B cell (primary cell): ENCODE measurements at regions of chr4 and their contacts with region 1.

Region 1: GRCh38 chr4:40629401-40630334 is at the start of gene RBM47:
- DNase-seq: peak; percentile 67
- ATAC-seq: peak; percentile 55
- H3K4me3 ChIP-seq: peak within 1 kb of the TSS; percentile 59 to 88 (median 70)
- H3K4me3 Mint-ChIP-seq: peak within 1 kb of the TSS; percentile 96
- H3K27ac ChIP-seq: peak within 1 kb of the TSS; percentile 61 to 72
- H3K27ac Mint-ChIP-seq: peak within 1 kb of the TSS; percentile 86
- H3K4me1 ChIP-seq: peaks cover 14 to 15% of the 10 kb centered on the region in 2 donors
- H3K4me1 Mint-ChIP-seq: peaks cover 20% of the 10 kb centered on the region
- H3K27me3 ChIP-seq: no peaks in the 10 kb centered on the region
- H3K27me3 Mint-ChIP-seq: peaks cover 4% of the 10 kb centered on the region
- CTCF ChIP-seq: no peak
- total RNA-seq, gene RBM47: 12.6 and 12.9 TPM in 2 replicates

Region 2: DNA sequence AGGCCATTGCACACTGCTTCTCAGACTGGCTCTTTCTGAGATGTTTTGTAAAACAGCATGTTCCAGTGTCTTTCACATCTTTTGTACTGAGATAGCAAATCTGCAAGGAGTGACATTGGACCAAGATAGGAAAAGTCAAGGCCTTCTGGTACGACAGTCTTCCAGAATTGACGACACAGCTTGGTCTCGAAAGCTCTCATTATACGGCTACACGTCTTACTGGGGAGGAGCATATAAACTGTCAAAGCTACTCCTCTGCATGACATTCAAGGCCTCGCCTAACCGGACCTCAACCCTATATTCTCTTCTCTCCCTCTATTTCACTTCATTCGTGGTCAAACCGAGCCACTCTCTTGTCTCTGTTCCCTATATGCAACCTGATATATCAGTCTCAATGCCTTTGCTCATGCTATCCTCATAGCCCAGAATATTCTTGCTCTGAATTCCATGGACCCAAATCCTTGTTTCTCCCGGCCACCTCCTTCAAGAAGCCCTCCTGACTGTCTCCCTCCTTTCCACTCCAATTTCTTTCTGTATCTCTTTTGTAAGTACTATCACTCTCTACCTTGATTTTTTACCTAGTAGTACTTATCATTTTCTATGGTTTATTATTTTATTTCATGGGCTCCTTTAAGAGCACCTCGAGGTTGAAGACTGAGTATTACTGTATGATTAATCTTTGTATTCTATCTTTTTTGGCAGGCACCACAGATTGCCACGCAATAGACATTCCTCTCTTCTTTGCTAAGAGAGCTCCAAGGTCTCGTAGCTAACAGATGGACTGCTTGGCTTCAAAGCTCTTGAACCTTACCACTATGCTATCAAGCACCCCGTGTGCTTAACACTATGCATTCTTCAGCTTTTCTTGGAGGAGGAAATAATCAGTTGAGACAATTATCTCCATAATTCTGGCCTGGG is 35.1 kb before region 1 on chr4:
- CTCF ChIA-PET with region 1: no interaction called
- POLR2A ChIA-PET with region 1: no interaction called
- intact Hi-C with region 1: no loop called
- DNase-seq: no peak
- ATAC-seq: no peak
- H3K4me3 ChIP-seq: no peak overlapping the region
- H3K4me3 Mint-ChIP-seq: no peak overlapping the region
- H3K27ac ChIP-seq: no peak overlapping the region
- H3K27ac Mint-ChIP-seq: no peak overlapping the region
- H3K4me1 ChIP-seq: no peaks in the 10 kb centered on the region
- H3K4me1 Mint-ChIP-seq: peaks cover 2% of the 10 kb centered on the region
- H3K27me3 ChIP-seq: no peaks in the 10 kb centered on the region
- H3K27me3 Mint-ChIP-seq: no peaks in the 10 kb centered on the region
- CTCF ChIP-seq: no peak

Region 3: GRCh38 chr4:40656201-40656901 is 26.7 kb after region 1 on chr4:
- CTCF ChIA-PET with region 1: interaction called, 3 read pairs
- POLR2A ChIA-PET with region 1: no interaction called
- intact Hi-C with region 1: loop called (anchors 2 kb)
- DNase-seq: peak; percentile 58
- ATAC-seq: peak; percentile 80
- H3K4me3 ChIP-seq: peak overlapping the region in 2 of 5 experiments; percentile 10 to 19
- H3K4me3 Mint-ChIP-seq: peak overlapping the region; percentile 46
- H3K27ac ChIP-seq: peak overlapping the region in 1 of 2 donors; percentile 3
- H3K27ac Mint-ChIP-seq: peak overlapping the region; percentile 54
- H3K4me1 ChIP-seq: peaks cover 9 to 18% of the 10 kb centered on the region in 2 donors
- H3K4me1 Mint-ChIP-seq: peaks cover 12% of the 10 kb centered on the region
- H3K27me3 ChIP-seq: no peaks in the 10 kb centered on the region
- H3K27me3 Mint-ChIP-seq: no peaks in the 10 kb centered on the region
- CTCF ChIP-seq: no peak

Region 4: GRCh38 chr4:40719008-40719623 is 89.4 kb after region 1 on chr4:
- CTCF ChIA-PET with region 1: no interaction called
- POLR2A ChIA-PET with region 1: no interaction called
- intact Hi-C with region 1: loop called (anchors 10 kb)
- DNase-seq: peak; percentile 41
- ATAC-seq: no peak
- H3K4me3 ChIP-seq: no peak overlapping the region
- H3K4me3 Mint-ChIP-seq: no peak overlapping the region
- H3K27ac ChIP-seq: no peak overlapping the region
- H3K27ac Mint-ChIP-seq: no peak overlapping the region
- H3K4me1 ChIP-seq: peaks cover 21 to 30% of the 10 kb centered on the region in 2 donors
- H3K4me1 Mint-ChIP-seq: peaks cover 8% of the 10 kb centered on the region
- H3K27me3 ChIP-seq: no peaks in the 10 kb centered on the region
- H3K27me3 Mint-ChIP-seq: no peaks in the 10 kb centered on the region
- CTCF ChIP-seq: no peak